Left cardiac atrium (tissue), 4 donors: ENCODE measurements at regions of chr12 and their contacts with region 1.

Region 1: DNA sequence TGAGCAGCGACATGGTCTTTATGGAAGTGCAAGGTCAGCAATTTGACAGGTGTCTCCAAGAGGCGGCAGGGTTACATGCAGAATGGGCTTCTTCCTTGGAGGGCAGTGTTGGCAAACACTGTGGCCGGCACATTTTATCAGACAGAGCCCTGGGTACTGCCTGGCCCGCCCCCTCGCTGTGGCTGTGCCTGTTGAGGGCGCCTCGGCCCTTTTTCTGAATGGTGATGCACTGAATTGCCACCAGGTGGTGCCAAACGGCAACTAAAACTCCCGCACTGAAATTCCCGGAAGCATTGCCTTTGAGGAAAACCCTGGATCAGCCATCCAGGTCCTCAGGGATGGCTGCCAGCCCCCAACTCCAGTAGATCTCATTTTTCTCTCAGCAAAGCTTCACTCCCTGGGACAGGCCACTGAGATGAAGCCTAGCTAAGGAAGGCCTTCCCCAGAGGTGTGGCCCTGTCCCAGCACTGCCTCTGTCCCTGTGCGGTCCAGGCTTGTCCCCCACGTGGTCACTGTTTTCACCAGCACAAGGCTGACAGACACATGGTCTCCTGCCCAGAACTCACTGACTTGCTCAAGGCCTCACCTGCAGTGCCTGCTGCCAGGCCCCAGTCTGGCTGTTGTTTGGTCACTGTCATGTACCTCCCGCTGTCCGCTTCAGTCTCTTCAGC is 73.6 kb downstream of the TESC start:
- DNase-seq: peak; percentile 72
- ATAC-seq: peak; percentile 78 to 86

Region 2: GRCh38 chr12:116703214-116703795 is 322.3 kb before region 1 on chr12:
- intact Hi-C with region 1: loop called in 1 of 2 experiments (anchors 10 kb)
- DNase-seq: peak; percentile 70
- ATAC-seq: peak; percentile 80 to 81

Region 3: DNA sequence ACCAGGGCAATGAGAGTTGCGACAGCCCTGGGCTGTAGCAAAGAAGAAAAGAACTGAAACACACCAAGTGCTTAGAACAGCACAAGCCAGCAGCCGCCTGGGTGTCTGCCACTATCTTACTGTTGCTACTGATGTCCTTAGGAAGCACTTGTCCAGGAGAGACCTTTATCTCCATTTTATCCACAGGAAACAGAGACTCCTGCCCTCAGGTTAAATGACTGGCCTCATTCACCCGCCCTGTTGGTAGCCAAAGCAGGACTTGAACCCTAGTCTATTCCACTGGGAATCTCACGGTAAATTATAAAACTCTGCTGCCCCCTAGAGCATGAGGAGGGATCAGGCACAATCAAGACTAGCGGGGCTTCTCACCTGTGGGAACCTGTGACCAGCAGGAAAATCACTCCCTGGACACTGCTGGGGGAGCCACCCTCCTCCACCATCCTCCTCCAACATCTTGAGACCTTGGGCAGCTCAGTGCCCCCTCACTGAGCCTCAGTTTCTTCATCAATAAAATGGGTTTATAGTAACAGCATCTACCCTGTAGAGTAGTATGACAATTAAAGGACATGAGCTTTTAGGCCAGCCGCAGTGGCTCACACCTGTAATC is 94.1 kb after region 1 on chr12:
- intact Hi-C with region 1: loop called (anchors 1 to 5 kb)
- DNase-seq: no peak
- ATAC-seq: peak; percentile 39 to 56

Region 4: DNA sequence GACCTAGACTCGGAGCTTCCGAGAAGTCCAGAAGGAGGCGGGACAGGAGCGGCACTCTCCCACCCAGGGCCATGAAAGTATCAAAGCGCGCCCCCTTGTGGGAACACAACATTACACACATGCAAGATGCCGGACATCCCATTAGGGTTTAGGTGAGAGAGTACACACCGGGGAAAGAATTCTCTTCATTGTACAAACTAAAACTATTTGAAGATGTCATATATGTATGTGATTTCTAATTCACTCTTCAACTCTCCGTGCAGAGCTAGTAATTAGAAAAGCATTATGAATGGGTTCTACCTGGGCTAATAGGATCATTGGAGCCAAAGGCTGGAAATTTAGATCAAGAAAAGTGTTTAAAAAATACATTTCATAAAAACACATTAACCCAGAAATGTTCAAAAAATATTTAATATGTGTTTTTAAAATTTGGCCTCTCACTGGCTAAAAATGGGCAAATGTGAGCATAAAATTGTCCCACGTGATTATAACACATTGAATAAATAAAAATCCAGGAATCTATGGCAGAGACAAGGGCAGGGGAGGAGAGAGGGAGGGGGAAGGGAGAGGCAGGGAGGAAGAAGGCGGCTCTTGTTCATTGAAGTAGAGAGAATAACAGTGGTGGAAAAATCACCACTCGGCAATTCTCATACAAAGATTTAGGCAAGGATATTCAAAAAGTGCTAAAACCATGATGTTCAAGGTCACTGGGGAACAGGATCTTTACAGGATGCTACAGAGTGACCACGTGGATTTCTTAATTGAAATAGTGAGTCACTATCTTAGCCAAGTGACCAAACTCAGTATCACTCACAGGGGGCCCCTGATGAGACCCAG is 125.8 kb after region 1 on chr12:
- intact Hi-C with region 1: loop called in 1 of 2 experiments (anchors 2 kb)
- DNase-seq: peak; percentile 82
- ATAC-seq: peak; percentile 69 to 81

Region 5: DNA sequence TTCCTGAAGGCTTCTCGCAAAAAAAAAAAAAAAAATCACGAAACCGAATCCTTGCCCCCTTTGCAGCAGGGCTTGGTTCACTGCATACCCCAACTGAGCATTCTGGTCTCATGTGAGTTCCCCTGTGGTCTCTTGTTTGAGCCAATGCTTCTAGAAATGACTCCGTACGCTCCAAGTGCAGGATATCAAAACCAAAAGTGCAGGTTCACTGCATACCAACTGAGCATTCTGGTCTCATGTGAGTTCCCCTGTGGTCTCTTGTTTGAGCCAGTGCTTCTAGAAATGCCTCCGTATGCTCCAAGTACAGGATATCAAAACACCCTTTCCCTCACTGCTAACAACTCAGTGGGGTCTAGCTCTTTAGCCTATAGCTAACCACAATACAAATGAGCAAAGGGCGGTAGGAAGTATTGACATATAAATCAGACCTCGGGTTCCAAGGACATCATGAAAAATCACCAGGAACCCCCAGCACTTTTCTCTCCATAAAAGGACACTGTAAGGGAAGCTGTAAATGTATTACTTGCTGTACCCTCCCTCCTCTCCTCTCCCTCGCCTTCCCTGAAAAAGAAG is 542.1 kb after region 1 on chr12:
- intact Hi-C with region 1: no loop called
- DNase-seq: no peak
- ATAC-seq: no peak